Aorta (tissue), 5 donors: ENCODE measurements at regions of chr7 and their contacts with region 1.

Region 1: GRCh38 chr7:104943502-104944343 is 70.3 kb upstream of the KMT2E start:
- DNase-seq: no peak
- ATAC-seq: peak; percentile 23
- H3K4me3 ChIP-seq: no peak overlapping the region
- H3K27ac ChIP-seq: peak overlapping the region; percentile 68 to 76
- H3K4me1 ChIP-seq: no peaks in the 10 kb centered on the region
- H3K27me3 ChIP-seq: no peaks in the 10 kb centered on the region

Region 2: DNA sequence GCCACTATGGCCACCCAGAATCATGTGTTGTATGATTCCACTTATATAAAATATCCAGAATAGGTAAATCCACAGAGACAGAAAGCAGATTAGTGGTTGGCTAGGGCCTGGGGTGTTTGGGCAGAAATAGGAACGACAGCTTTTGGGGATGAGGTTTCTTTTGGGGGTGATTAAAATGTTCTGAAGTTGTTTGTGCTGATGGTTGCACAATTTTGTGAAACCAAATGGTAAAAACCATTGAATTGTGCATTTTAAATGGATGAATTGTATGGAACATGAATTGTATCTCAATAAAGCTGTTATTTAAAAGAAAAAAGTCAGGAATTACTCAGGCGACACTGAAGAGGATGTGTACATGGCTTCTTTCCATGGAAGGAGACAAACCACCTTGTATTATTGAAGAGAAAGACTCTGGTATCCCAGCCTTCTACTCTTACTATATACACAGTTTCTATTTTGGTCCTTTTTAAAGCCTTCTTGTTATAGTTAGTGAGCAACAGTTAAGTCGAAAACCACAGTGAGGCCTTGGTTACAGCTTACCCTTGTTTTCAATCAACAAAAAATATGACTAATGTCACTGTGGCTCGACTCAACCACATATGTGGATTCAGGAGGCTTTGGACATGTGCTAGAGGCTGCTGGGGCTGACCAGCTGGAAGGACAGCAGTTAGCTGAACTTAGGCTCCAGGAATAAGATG is 13.2 kb after region 1 on chr7:
- intact Hi-C with region 1: loop called in 1 of 2 experiments (anchors 1 kb)
- DNase-seq: no peak
- ATAC-seq: no peak
- H3K4me3 ChIP-seq: no peak overlapping the region
- H3K27ac ChIP-seq: peak overlapping the region; percentile 67 to 95
- H3K4me1 ChIP-seq: peaks cover 0 to 9% of the 10 kb centered on the region in 2 donors
- H3K27me3 ChIP-seq: no peaks in the 10 kb centered on the region

Region 3: GRCh38 chr7:104973909-104974415 is 30.2 kb after region 1 on chr7:
- intact Hi-C with region 1: loop called in 1 of 2 experiments (anchors 2 kb)
- DNase-seq: no peak
- ATAC-seq: peak; percentile 45
- H3K4me3 ChIP-seq: no peak overlapping the region
- H3K27ac ChIP-seq: peak overlapping the region in 1 of 2 donors; percentile 89
- H3K4me1 ChIP-seq: peaks cover 11 to 15% of the 10 kb centered on the region in 2 donors
- H3K27me3 ChIP-seq: no peaks in the 10 kb centered on the region

Region 4: GRCh38 chr7:105013221-105013815 is 69.6 kb after region 1 on chr7:
- intact Hi-C with region 1: loop called (anchors 2 to 10 kb)
- DNase-seq: peak; percentile 97
- ATAC-seq: peak; percentile 92
- H3K4me3 ChIP-seq: peak overlapping the region; percentile 19 to 91
- H3K27ac ChIP-seq: peak overlapping the region; percentile 96 to 99
- H3K4me1 ChIP-seq: no peaks in the 10 kb centered on the region
- H3K27me3 ChIP-seq: no peaks in the 10 kb centered on the region

Region 5: DNA sequence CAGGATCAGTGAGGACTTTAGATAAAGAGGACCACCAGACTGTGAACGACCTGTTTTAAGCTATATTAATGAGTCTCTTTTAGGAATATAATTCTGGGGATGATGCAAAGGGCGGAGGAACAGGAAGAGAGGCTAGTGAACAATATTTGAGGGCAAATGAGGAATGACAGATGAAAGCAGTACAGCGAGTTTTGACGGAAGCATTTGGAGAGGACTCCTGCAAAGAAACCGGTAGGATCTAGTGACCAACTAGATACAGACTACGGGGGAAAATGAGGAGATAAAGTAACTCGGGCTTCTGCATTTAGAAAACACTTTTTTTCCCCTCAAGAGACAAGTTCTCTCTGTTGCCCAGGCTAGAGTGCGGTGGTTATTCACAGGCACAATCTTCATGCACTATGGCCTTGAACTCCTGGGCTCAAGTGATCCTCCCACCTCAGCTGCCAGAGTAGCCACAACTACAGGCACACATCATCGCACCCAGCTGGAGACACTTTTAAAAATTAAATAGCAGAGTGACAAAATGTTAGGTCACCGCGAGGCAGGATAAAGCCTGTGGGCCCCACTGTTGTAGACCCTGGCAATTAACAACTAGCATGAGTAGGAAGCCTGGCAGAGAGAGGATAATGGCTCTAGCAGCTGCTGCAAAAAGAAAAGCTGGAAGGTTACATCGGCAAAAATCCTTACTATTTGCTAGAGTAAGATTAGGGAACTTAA is 301.8 kb after region 1 on chr7:
- intact Hi-C with region 1: no loop called
- DNase-seq: no peak
- ATAC-seq: no peak
- H3K4me3 ChIP-seq: no peak overlapping the region
- H3K27ac ChIP-seq: no peak overlapping the region
- H3K4me1 ChIP-seq: no peaks in the 10 kb centered on the region
- H3K27me3 ChIP-seq: no peaks in the 10 kb centered on the region